Ovary (tissue), 10 donors: ENCODE measurements at regions of chr2 and their contacts with region 1.

Region 1: GRCh38 chr2:196076778-196077568 is 8.3 kb upstream of the DNAH7 start:
- DNase-seq: no peak
- H3K4me3 ChIP-seq: no peak overlapping the region
- H3K27ac ChIP-seq: no peak overlapping the region
- H3K4me1 ChIP-seq: no peaks in the 10 kb centered on the region
- H3K27me3 ChIP-seq: no peaks in the 10 kb centered on the region
- CTCF ChIP-seq: no peak
- EP300 ChIP-seq: no peak
- POLR2A ChIP-seq: no peak

Region 2: DNA sequence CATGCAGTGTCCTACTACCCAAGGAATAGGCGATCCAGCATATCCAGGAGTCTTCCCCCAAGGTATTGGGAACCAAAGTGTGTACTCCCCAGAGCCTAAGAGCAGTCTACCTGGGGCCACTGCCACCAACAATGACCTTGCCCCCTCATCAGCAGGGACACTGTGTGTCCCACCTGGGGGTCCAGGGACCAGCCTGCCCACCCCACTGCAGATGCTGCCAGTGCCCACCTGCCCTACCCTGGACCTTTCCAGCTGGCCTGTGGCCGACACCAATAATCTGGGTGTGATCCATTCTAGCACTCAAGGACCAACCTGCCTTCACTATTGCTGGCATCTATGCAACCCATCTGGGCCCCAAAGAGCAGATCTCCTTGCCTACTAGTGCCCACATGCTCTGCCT is 40.5 kb before region 1 on chr2:
- intact Hi-C with region 1: no loop called
- DNase-seq: no peak
- H3K4me3 ChIP-seq: no peak overlapping the region
- H3K27ac ChIP-seq: no peak overlapping the region
- H3K4me1 ChIP-seq: no peaks in the 10 kb centered on the region
- H3K27me3 ChIP-seq: no peaks in the 10 kb centered on the region
- CTCF ChIP-seq: no peak
- EP300 ChIP-seq: no peak
- POLR2A ChIP-seq: no peak

Region 3: GRCh38 chr2:196341277-196341841 is 264.4 kb after region 1 on chr2:
- intact Hi-C with region 1: loop called in 1 of 4 experiments (anchors 10 kb)
- DNase-seq: no peak
- H3K4me3 ChIP-seq: no peak overlapping the region
- H3K27ac ChIP-seq: no peak overlapping the region
- H3K4me1 ChIP-seq: no peaks in the 10 kb centered on the region
- H3K27me3 ChIP-seq: no peaks in the 10 kb centered on the region
- CTCF ChIP-seq: no peak
- EP300 ChIP-seq: no peak
- POLR2A ChIP-seq: no peak

Region 4: GRCh38 chr2:196750982-196751635 is 674.1 kb after region 1 on chr2:
- intact Hi-C with region 1: loop called in 1 of 4 experiments (anchors 10 kb)
- DNase-seq: peak; percentile 17 to 60 (median 37)
- H3K4me3 ChIP-seq: no peak overlapping the region
- H3K27ac ChIP-seq: no peak overlapping the region
- H3K4me1 ChIP-seq: no peaks in the 10 kb centered on the region
- H3K27me3 ChIP-seq: no peaks in the 10 kb centered on the region
- CTCF ChIP-seq: peak in 2 of 3 donors; percentile 12 to 22
- EP300 ChIP-seq: no peak
- POLR2A ChIP-seq: no peak

Region 5: DNA sequence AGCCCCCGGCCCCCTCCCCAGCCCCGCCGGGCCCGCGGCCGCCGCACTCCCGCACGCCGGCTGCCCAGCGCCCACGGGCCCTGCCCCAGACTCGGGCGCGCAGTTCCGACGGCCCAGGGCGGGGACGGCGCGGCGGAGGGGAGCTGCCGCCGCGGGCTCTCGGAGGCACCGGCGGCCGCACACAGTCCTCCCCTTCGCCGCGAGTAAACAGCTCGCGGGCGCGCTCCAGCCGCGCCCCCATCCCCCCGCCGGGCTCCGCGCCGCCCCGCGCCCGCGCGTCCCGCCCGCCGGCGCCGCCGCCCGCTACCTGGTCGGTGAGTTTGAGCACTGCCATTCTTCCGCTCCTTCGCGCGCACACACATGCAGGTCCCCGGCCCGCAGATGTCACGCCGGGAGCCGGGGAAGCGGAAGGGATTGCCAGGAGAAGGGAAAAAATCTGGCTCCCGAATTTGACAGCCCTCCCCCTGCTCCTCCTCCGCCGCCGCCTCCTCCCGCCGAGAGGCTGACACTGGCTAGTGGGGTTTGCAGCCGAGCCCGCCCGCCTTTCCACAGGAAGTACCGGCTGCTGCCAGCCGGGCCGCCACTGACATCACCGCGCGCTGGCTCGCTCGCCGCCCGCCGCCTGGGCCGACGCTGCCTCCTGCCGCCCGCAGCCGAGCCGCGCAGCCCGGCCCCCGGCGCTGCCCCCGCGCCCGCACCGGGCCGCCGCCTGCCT is 1233.5 kb after region 1 on chr2 and contains the start of gene ANKRD44:
- intact Hi-C with region 1: no loop called
- DNase-seq: peak; percentile 83 to 90 (median 88)
- H3K4me3 ChIP-seq: peak within 1 kb of the TSS; percentile 52
- H3K27ac ChIP-seq: peak within 1 kb of the TSS; percentile 61 to 64
- H3K4me1 ChIP-seq: peaks cover 4% of the 10 kb centered on the region
- H3K27me3 ChIP-seq: no peaks in the 10 kb centered on the region
- CTCF ChIP-seq: peak in 2 of 3 donors; percentile 68 to 78
- EP300 ChIP-seq: no peak
- POLR2A ChIP-seq: peak; percentile 67
- total RNA-seq, gene ANKRD44: 9.2 to 60.0 (median 11.5) TPM